Tibial artery (tissue), 4 donors: ENCODE measurements at regions of chr9 and their contacts with region 1.

Region 1: DNA sequence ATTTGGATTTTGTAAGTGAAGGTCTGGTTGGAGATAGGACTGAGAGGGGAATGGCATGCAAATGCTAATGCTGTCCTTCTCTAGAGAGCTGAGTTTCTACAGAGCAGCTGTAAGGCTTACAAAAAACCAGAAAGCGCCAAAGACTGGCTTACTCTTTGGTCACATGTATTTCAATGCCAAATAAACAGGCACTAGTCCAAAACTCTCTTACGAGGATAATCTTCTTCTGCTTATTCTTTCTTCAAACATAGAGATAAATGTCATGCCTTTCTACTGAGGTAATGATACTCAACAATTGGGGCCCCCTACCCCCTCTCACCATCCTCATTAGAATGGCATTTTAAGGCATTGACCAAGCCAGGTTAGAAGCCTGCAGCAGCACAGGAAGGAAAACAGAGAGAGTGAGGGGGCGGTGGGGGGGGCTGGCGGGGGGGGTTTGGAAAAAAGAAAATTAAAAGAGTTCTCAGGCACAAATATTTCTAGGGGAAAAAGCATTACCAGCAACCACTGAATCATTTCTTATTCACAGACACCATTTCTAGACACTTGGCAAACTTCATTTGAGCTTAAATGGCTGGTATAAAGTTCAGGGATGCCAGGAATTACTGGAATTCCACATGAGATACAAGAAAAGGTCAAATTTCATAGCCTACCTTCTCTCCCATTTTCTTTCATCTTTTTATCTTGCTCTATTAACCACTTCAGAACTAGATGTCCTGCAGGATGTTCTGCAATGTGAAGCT is 34.0 kb downstream of the PUM3 start:
- DNase-seq: no peak
- H3K4me3 ChIP-seq: no peak overlapping the region
- H3K27ac ChIP-seq: peak overlapping the region; percentile 57 to 61
- H3K4me1 ChIP-seq: peaks cover 0 to 45% (median 16%) of the 10 kb centered on the region in 4 donors
- H3K27me3 ChIP-seq: no peaks in the 10 kb centered on the region
- CTCF ChIP-seq: no peak

Region 2: DNA sequence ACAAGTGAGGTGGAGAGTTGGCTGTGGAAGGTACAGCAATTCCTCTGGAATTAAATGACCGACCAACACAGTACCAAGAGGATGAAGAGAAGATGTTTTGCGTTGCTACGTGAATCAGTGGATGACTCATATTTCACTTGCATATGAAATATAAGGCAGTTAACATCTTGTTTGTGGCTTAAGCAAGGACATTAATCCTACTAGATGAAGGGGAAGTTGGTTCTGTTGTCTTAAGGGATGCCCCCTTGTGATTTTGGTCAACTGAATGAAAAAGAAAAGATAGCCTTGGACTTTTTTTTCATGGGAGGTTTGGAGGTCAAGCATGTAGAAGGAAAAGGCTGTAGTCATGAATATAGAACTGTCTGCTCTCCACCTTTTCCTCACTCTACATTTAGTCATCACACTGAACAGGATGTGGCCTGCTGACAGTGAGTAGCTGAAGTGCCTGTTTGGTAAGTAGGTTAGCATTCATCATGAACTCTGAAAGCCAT is 154.4 kb before region 1 on chr9:
- intact Hi-C with region 1: no loop called
- DNase-seq: no peak
- H3K4me3 ChIP-seq: no peak overlapping the region
- H3K27ac ChIP-seq: peak overlapping the region; percentile 21 to 33
- H3K4me1 ChIP-seq: peaks cover 0 to 13% (median 0%) of the 10 kb centered on the region in 4 donors
- H3K27me3 ChIP-seq: no peaks in the 10 kb centered on the region
- CTCF ChIP-seq: no peak

Region 3: DNA sequence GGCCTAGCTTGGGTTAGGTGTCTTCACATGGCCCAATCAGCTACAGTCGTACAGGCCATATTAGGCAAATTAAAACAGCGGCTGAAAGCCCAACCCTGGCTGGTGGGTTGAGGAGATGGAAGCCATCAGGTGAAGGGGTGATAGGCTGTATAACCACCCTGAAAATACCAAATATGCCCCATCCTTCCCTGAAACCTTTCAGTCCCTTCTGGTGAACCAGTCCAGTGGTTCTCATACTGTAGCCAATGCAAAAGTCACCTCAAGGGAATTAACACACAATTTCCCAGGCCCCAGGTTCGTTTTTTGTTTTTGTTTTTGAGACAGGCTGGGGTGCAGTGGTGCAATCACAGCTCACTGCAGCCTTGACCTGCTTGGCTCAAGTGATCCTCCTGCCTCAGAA is 112.4 kb before region 1 on chr9:
- intact Hi-C with region 1: no loop called
- DNase-seq: no peak
- H3K4me3 ChIP-seq: no peak overlapping the region
- H3K27ac ChIP-seq: no peak overlapping the region
- H3K4me1 ChIP-seq: no peaks in the 10 kb centered on the region
- H3K27me3 ChIP-seq: no peaks in the 10 kb centered on the region
- CTCF ChIP-seq: no peak

Region 4: DNA sequence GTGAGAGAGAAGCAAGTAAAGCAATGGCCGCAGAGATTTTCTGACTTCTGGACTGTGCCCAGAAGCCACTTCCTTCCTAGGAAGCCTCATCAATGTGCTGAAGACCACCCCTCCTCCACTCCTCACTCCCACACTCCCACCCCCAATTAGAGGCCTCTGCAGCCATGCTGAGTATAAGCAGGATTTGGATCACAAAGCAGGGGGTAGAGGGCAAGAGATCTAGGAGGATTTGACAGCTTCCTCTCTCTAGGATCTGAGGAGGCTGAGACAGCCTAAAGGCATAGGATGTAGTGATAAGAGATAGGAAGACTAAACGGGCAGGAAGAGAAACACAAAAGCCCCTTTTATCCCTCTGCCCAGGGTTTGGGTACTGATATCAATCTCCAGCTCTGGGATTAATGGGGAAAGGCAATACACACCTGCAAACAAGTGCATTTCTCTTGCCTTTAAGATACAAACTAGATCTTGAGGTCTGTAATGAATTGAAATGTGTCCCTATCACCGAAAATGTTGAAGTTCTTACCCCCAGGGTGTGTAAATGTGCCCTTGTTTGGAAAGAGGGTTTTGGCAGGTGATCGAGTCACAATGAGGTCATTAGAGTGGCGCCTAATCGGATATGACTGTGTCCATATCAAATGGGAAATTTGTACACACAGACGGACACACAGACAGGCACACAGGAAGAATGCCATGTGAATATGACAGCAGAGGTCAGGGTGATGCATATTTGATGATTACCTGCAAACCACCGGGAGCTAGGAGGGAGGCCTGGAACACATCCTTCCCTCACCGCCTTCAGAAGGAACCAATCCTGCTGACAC is 64.1 kb before region 1 on chr9:
- intact Hi-C with region 1: loop called (anchors 10 kb)
- DNase-seq: no peak
- H3K4me3 ChIP-seq: no peak overlapping the region
- H3K27ac ChIP-seq: no peak overlapping the region
- H3K4me1 ChIP-seq: no peaks in the 10 kb centered on the region
- H3K27me3 ChIP-seq: no peaks in the 10 kb centered on the region
- CTCF ChIP-seq: no peak

Region 5: GRCh38 chr9:2837915-2838314 is 28.1 kb after region 1 on chr9:
- intact Hi-C with region 1: loop called (anchors 5 kb)
- DNase-seq: no peak
- H3K4me3 ChIP-seq: peak overlapping the region; percentile 12 to 18
- H3K27ac ChIP-seq: peak overlapping the region; percentile 40 to 52
- H3K4me1 ChIP-seq: peaks cover 0 to 51% (median 21%) of the 10 kb centered on the region in 4 donors
- H3K27me3 ChIP-seq: no peaks in the 10 kb centered on the region
- CTCF ChIP-seq: peak; percentile 33 to 42

Region 6: GRCh38 chr9:4038182-4038723 is 1228.4 kb after region 1 on chr9:
- intact Hi-C with region 1: no loop called
- DNase-seq: no peak
- H3K4me3 ChIP-seq: no peak overlapping the region
- H3K27ac ChIP-seq: no peak overlapping the region
- H3K4me1 ChIP-seq: no peaks in the 10 kb centered on the region
- H3K27me3 ChIP-seq: no peaks in the 10 kb centered on the region
- CTCF ChIP-seq: no peak